ENCODE measurements at regions of chr11 and their contacts with region 1.

Region 1: GRCh38 chr11:12043959-12044819 is 35.8 kb upstream of the DKK3 start:
- DNase-seq: peak; percentile 74
- H3K4me3 ChIP-seq: peak overlapping the region in 1 of 2 experiments; percentile 29; a peak in 3 of 4 replicates
- H3K27ac ChIP-seq: peak overlapping the region; percentile 70 to 96; a peak in 3 of 4 replicates
- H3K4me1 ChIP-seq: peaks cover 6 to 16% of the 10 kb centered on the region in 2 experiments; a peak in 3 of 4 replicates
- H3K27me3 ChIP-seq: no peaks in the 10 kb centered on the region
- CTCF ChIP-seq: peak; percentile 97
- EP300 ChIP-seq: peak; percentile 16 to 95; a peak in 3 of 4 replicates
- RAD21 ChIP-seq: peak; percentile 95

Region 2: DNA sequence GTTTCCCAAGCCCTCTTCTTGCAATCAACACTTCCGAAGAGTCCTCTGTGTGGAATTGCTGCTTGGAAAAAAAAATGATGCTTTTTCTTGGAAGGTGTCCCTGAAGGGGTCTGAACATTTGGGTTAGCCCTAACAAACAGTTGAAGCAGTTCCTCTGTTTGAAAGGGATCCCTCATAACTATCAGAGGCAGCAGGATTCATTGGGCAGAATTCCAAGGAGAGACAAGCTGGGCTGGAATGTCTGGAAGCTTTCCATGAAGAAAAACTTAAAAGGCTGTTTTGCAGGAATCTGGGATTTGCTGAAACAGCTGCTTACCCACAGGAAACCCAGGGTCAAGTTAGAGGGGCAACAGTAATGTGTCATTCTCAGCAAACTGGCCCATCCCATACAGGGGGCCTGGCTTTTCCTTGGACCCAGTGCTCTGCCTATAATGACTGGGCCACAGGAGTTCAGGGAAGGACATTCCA is 694.3 kb before region 1 on chr11:
- CTCF ChIA-PET with region 1: no interaction called
- POLR2A ChIA-PET with region 1: no interaction called
- DNase-seq: no peak
- H3K4me3 ChIP-seq: no peak overlapping the region
- H3K27ac ChIP-seq: no peak overlapping the region
- H3K4me1 ChIP-seq: peaks cover 0 to 5% of the 10 kb centered on the region in 2 experiments; a peak in 1 of 4 replicates
- H3K27me3 ChIP-seq: no peaks in the 10 kb centered on the region
- CTCF ChIP-seq: no peak
- EP300 ChIP-seq: no peak
- RAD21 ChIP-seq: no peak

Region 3: DNA sequence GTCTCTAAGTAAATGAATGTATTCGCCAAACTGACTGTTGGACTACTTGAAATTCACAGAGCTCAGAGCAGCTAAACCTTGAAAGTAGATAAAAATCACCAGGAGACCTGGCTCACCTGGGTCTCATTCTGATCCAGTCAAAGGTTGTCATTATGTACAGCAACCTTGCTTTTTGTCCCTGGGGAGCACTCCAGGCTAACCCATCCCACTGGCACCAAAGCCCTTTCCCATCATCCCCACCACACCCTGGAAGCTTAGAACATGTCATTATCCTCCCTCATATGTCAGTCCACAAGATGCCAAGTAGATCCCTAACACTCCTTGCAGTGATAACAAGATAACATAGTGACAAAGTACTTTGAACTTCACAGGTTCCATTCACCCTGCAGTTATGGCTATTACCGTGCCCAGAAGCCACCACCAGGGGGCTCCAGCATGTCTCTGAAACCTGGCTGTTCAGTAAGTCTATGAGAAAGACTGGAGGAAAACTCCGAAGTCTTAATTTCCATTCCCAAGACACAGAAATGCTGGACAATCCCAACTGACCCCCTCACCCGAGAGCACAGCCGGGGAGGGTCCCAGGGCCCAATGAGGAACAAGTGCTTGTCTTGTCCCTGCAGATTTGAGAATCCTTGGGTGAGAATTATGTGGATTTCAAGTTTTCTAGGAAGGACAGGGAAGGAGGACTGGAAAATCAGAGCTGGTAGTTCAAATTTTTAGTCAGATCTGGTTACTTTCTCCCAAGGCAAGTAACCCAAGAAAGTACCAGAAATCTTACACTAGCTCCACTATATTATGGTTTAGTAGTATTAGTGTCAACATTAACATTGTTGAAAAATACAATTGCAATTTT is 245.4 kb before region 1 on chr11:
- CTCF ChIA-PET with region 1: interaction called, 77 read pairs
- POLR2A ChIA-PET with region 1: no interaction called
- DNase-seq: peak; percentile 60
- H3K4me3 ChIP-seq: no peak overlapping the region; a peak in 1 of 4 replicates
- H3K27ac ChIP-seq: no peak overlapping the region
- H3K4me1 ChIP-seq: no peaks in the 10 kb centered on the region
- H3K27me3 ChIP-seq: no peaks in the 10 kb centered on the region; the same call in 1 of the 2 replicates
- CTCF ChIP-seq: peak; percentile 96
- EP300 ChIP-seq: no peak
- RAD21 ChIP-seq: peak; percentile 84

Region 4: DNA sequence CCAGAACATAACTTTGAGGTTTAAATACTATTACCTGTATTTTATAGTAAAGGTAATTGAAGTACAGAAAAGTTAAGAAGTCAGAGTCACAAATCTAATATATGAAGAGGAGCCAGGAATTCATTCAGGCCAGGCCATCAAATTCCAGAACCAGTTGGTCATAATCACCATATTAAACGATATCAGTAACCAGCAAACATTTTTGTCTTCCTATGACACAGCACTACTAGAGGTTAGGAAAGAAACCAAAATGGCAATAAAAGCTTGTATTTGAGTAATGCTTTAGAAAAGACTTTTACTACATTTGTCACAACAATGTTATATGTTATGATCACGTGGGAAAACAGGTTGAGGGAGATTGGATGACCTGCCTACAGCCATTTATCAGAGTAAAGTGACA is 98.0 kb before region 1 on chr11:
- CTCF ChIA-PET with region 1: interaction called, 10 read pairs
- POLR2A ChIA-PET with region 1: no interaction called
- DNase-seq: no peak
- H3K4me3 ChIP-seq: no peak overlapping the region
- H3K27ac ChIP-seq: peak overlapping the region; percentile 60 to 65
- H3K4me1 ChIP-seq: peaks cover 5 to 13% of the 10 kb centered on the region in 2 experiments
- H3K27me3 ChIP-seq: no peaks in the 10 kb centered on the region
- CTCF ChIP-seq: no peak
- EP300 ChIP-seq: no peak
- RAD21 ChIP-seq: no peak

Region 5: DNA sequence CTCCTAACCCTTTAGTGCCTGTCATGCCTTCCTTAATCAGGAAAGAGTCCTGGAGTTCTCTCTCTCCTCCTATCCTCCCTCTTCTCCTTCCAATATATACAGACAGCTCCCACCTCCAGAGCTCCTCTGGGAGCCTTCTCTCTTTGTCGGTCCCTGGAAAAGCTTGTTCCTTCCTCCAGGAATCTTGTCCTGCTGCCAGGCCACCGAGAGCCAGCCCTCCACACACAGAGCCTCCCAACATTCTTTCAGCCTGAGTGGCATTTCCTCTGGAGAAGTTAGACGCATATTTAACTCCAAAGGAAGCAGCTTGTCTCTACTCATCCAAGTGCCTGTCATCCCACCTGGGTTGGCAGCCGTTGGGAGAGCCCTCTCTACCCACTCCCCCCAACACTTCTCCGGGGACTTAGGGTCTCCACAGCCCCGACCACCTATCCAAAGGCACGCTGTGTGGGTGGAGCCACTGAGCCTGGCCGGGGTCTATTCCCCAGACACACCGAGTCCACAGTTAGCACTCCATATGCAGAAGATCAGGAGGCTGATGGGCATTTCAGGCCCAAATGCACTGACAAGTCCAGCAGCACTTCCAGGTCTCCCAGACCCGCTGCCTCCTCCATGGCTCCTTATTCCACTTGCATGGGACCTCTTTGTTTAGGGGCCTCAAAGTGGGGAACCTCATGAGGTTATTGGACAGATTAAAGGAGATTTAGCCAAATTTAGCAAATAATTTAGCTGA is 66.8 kb before region 1 on chr11:
- CTCF ChIA-PET with region 1: interaction called, 14 read pairs
- POLR2A ChIA-PET with region 1: no interaction called
- DNase-seq: no peak
- H3K4me3 ChIP-seq: no peak overlapping the region
- H3K27ac ChIP-seq: peak overlapping the region; percentile 99 to 100
- H3K4me1 ChIP-seq: peaks cover 83 to 93% of the 10 kb centered on the region in 2 experiments
- H3K27me3 ChIP-seq: no peaks in the 10 kb centered on the region
- CTCF ChIP-seq: no peak
- EP300 ChIP-seq: peak; percentile 64 to 97
- RAD21 ChIP-seq: no peak

Region 6: DNA sequence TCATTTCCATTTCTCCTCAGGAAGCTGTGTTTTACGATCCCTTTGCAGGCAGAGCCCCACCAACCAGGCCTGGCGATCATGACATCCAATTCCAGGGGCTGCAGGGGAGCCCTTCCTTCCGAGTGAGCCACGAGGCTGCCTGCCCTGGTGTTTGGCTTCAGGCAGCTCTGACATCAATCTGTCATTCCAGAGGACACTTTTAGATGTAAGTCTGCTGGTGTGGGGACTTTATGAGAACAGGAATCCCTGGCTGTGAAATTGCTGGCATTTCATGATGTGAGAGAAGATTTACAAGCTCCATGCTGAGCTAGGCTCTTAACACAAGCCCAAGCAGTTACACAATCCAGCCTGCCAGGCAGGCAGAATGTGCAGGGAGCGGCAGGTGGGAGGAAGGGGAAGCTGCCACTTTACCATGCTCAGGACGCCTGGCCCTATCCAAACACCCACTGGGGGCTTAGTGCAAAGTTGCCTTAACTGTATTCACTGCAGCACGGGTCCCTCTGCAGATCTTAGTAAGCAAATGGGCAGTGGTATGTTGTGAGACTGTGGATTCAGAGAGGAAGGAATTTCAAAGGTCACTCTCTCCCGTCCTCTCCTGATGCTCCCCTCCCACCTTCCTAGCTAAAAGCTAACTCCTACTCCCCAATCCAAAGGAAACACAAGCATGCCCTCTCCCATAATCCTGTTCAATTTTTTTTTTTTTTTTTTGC is 22.8 kb after region 1 on chr11:
- CTCF ChIA-PET with region 1: interaction called, 10 read pairs
- POLR2A ChIA-PET with region 1: no interaction called
- DNase-seq: no peak
- H3K4me3 ChIP-seq: no peak overlapping the region
- H3K27ac ChIP-seq: peak overlapping the region; percentile 3 to 86; a peak in 3 of 4 replicates
- H3K4me1 ChIP-seq: peaks cover 5 to 20% of the 10 kb centered on the region in 2 experiments; a peak in 3 of 4 replicates
- H3K27me3 ChIP-seq: no peaks in the 10 kb centered on the region
- CTCF ChIP-seq: no peak
- EP300 ChIP-seq: no peak
- RAD21 ChIP-seq: no peak

Region 7: GRCh38 chr11:12094872-12095800 is 50.9 kb after region 1 on chr11:
- CTCF ChIA-PET with region 1: no interaction called
- POLR2A ChIA-PET with region 1: no interaction called
- DNase-seq: no peak
- H3K4me3 ChIP-seq: no peak overlapping the region
- H3K27ac ChIP-seq: no peak overlapping the region
- H3K4me1 ChIP-seq: peaks cover 0 to 19% of the 10 kb centered on the region in 2 experiments; a peak in 3 of 4 replicates
- H3K27me3 ChIP-seq: no peaks in the 10 kb centered on the region
- CTCF ChIP-seq: no peak
- EP300 ChIP-seq: no peak
- RAD21 ChIP-seq: no peak

Region 8: DNA sequence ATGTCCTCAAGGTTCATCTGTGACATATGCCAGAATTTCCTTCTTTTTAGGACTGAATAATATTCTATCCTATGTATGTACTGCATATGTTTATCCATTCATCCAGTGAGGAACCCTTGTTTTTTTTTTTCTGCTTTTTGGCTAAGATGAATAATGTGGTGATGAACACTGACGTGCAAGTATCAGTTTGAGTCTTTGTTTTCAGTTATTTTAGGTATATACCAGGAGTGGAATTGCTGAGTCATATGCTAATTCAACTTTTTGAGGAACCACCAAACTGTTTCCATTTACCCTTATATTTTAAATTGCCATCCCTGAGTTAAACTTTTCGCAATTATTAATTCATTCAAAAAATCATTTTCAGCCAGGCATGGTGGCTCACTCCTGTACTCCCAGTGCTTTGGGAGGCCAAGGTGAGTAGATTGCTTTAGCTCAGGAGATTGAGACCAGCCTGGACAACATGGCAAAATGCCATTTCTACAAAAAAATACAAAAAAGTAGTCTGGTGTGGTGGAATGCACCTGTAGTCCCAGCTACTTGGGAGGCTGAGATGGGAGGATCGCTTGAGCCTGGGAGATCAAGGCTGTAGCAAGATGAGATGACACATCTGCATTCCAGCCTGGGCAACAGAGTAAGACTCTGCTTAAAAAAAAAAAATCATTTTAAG is 130.4 kb after region 1 on chr11:
- CTCF ChIA-PET with region 1: no interaction called
- POLR2A ChIA-PET with region 1: no interaction called
- DNase-seq: no peak
- H3K4me3 ChIP-seq: no peak overlapping the region
- H3K27ac ChIP-seq: peak overlapping the region in 1 of 2 experiments; percentile 99; a peak in 3 of 4 replicates
- H3K4me1 ChIP-seq: peaks cover 0 to 50% of the 10 kb centered on the region in 2 experiments; a peak in 2 of 4 replicates
- H3K27me3 ChIP-seq: no peaks in the 10 kb centered on the region
- CTCF ChIP-seq: no peak
- EP300 ChIP-seq: peak in 1 of 2 experiments; percentile 54; a peak in 2 of 4 replicates
- RAD21 ChIP-seq: no peak

Region 9: DNA sequence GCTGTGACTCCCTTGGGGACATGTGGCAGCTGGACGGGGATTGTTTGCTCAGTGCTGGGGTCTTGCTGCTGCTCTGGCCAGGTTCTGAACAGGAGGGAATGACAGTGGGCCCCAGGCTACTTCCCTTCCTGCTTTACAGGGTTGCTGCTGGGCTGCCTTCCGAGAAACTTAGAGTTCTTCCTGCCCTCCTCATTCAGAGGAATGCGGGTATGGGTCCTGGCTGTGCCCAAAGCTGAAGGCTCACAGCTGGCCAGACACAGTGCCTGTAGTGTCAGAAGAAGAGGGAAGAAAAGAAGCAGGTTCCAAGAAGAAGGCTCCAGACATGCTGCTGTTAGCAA is 224.9 kb after region 1 on chr11:
- CTCF ChIA-PET with region 1: interaction called, 11 read pairs
- POLR2A ChIA-PET with region 1: no interaction called
- DNase-seq: peak; percentile 67
- H3K4me3 ChIP-seq: no peak overlapping the region
- H3K27ac ChIP-seq: peak overlapping the region; percentile 2 to 74
- H3K4me1 ChIP-seq: peaks cover 11 to 24% of the 10 kb centered on the region in 2 experiments; a peak in 3 of 4 replicates
- H3K27me3 ChIP-seq: no peaks in the 10 kb centered on the region
- CTCF ChIP-seq: no peak
- EP300 ChIP-seq: no peak
- RAD21 ChIP-seq: no peak

Measured in SK-N-SH (cell line).